ENCODE measurements at regions of chr17 and their contacts with region 1.

Region 1: DNA sequence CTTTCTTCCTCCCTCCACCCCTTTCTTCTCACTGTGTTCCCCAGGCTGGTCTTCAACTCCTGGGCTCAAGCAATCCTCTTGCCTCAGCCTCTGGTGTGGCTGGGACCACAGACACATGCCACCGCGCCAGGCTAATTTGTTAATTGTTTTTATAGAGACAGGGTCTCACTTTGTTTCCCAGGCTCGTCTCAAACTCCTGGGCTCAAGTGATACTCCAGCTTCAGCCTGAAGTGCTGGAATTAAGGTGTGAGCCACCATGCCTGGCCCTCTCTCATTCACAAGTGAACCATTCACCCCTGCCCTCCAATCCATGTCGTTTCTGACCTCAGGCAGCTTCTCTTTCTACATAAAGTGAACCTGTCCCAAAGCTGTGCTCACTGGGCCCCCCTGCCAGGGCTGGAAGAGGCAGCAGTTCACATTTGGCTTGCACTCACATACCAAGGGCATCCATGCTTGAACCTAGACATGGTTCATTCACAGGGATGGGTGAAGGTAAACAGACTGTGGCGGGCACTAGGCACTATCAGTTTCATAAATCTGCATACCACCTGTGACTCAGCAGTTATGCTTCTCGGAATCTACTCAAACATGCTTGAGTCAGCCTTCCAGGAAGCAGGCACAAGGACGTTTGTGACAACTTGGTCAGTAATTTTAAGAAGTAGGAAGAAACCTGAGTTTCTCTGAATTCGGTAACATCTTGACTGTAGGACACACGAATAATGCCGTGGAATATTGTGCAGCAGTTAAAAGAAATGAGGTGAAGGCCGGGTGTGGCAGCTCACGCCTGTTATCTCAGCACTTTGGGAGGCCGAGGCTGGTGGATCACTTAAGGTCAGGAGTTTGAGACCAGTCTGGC is 6.0 kb upstream of the RNF213 start:
- DNase-seq: peak; percentile 97 to 99
- ATAC-seq: peak; percentile 90
- H3K4me3 ChIP-seq: no peak overlapping the region
- H3K27ac ChIP-seq: peak overlapping the region; percentile 94 to 99
- H3K4me1 ChIP-seq: peaks cover 72% of the 10 kb centered on the region
- CTCF ChIP-seq: no peak
- EP300 ChIP-seq: peak; percentile 83 to 92; a peak in 4 of 5 replicates
- POLR2A ChIP-seq: no peak
- RAD21 ChIP-seq: peak in 1 of 2 experiments; percentile 29; a peak in 3 of 5 replicates

Region 2: DNA sequence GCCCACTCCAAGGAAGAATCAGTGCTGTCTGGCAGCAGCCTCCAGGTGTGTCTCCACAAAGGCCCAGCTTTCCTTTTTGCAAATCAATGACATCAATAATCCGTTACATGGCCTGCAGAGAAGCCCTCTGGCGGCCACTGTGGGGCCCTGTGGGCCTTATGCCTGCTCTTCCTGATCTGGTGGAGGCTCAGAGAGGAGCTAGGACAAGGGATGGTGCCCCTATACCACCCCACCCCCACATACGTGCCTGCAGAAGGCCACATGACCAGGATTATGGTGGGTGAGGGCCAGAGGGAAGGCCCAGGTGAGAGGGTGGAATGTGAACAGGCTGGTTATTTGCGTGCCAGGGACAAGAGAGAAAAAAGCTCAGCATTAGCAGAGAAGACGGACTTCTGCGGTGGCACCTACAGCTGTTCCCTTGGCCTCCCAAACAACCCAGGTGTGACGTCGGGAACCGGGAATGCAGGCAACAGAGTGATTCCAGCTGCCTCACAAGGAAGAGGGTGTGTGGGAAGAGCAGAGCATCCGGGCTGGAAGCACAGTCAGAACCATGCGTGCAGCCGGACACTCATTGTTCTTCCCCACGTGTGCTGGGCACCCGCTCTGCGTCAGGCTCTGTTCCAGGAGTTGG is 130.2 kb before region 1 on chr17:
- CTCF ChIA-PET with region 1: no interaction called
- POLR2A ChIA-PET with region 1: no interaction called
- DNase-seq: peak; percentile 45 to 53
- ATAC-seq: peak; percentile 71 to 87
- H3K4me3 ChIP-seq: no peak overlapping the region
- H3K27ac ChIP-seq: no peak overlapping the region
- H3K4me1 ChIP-seq: no peaks in the 10 kb centered on the region
- CTCF ChIP-seq: peak; percentile 36
- EP300 ChIP-seq: no peak
- POLR2A ChIP-seq: no peak; the same call in 1 of the 2 replicates
- RAD21 ChIP-seq: peak; percentile 19 to 32; a peak in 2 of 5 replicates

Region 3: GRCh38 chr17:80147035-80147836 is 107.4 kb before region 1 on chr17 and contains the start of gene EIF4A3:
- CTCF ChIA-PET with region 1: interaction called, 14 read pairs
- POLR2A ChIA-PET with region 1: interaction called, 3 read pairs
- DNase-seq: peak; percentile 100
- ATAC-seq: peak; percentile 92 to 93
- H3K4me3 ChIP-seq: peak within 1 kb of the TSS; percentile 65
- H3K27ac ChIP-seq: peak within 1 kb of the TSS; percentile 92 to 95
- H3K4me1 ChIP-seq: peaks cover 26% of the 10 kb centered on the region
- CTCF ChIP-seq: no peak
- EP300 ChIP-seq: no peak
- POLR2A ChIP-seq: peak; percentile 97
- RAD21 ChIP-seq: no peak
- polyA plus RNA-seq, gene EIF4A3: 181 and 201 TPM in 2 replicates

Region 4: DNA sequence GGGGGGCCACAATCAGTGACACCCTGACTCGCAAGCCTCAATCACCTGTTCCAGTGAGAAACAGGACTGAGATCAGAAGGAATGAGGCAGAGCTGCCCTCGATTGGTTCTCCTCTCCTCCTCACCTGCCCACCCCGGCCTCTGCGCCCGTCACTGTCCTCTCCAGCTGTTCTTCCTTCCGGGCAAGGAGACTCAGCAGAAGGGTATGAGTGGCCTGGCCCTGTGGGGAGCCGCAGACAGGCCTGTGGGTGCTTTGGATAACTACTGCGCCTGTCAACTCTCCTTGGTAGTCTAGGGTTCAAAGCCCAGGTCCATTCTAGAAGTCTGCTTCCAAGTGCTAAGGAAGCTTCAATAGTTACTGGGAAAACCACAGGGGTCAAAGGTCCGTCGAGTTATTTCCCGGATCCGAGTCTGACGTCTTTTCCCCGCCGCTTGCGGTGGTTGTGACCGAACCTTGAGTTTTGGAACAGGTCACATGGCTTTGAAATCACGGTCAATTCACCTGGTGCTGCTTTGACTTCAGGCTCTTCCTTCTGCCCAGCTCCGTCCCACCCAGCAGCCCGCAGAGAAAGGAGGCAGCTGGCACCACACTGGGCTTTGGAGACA is 76.5 kb before region 1 on chr17:
- CTCF ChIA-PET with region 1: interaction called, 18 read pairs
- POLR2A ChIA-PET with region 1: no interaction called
- DNase-seq: no peak
- ATAC-seq: no peak
- H3K4me3 ChIP-seq: no peak overlapping the region
- H3K27ac ChIP-seq: no peak overlapping the region
- H3K4me1 ChIP-seq: peaks cover 11% of the 10 kb centered on the region
- CTCF ChIP-seq: no peak
- EP300 ChIP-seq: no peak
- POLR2A ChIP-seq: no peak
- RAD21 ChIP-seq: no peak

Region 5: DNA sequence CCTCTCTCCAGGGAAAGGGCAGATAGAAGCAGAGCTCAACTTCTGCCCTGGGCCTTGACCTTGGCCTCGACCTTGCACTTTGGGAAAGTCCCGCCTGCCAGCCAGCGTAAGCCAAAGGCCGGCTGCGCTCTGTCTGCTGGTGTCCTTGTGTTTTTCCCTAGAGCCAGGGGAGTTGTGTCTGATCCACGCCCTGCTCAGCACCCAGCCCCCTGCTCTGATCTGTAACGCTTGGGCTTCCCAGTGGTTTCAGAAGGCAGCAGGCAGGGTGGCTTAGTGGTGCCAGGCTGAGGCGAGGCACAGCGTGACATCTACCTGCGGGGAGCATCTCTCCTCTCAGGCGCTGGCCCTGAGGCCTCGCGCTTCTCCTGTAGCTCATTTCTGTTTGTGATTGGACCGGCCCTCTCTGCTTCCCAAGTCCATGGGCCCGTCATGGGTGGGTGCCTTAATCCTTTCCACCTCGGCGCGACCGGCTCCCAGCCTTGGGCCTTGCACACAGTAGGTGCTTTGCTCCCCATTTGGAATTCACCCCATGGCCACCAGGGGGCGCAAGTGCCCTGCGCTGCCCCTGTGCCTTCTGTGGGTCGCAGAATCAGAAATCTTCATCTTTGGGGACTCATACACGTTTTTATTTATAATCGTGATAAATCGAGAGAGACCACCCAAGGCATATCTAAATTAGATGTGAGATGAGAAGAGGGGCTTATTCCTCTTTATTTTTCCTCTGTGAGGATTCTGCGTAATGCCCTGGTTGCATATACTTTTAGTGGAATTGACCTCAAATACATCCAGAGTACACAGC is 58.7 kb before region 1 on chr17:
- CTCF ChIA-PET with region 1: interaction called, 39 read pairs
- POLR2A ChIA-PET with region 1: no interaction called
- DNase-seq: no peak
- ATAC-seq: peak in 1 of 2 experiments; percentile 14; a peak in 1 of 6 replicates
- H3K4me3 ChIP-seq: no peak overlapping the region
- H3K27ac ChIP-seq: no peak overlapping the region
- H3K4me1 ChIP-seq: no peaks in the 10 kb centered on the region
- CTCF ChIP-seq: peak; percentile 83
- EP300 ChIP-seq: no peak
- POLR2A ChIP-seq: no peak
- RAD21 ChIP-seq: peak; percentile 81 to 88

Region 6: GRCh38 chr17:80203471-80203963 is 51.1 kb before region 1 on chr17:
- CTCF ChIA-PET with region 1: interaction called, 12 read pairs
- POLR2A ChIA-PET with region 1: no interaction called
- DNase-seq: no peak
- ATAC-seq: peak; percentile 16 to 18; a peak in 2 of 6 replicates
- H3K4me3 ChIP-seq: no peak overlapping the region
- H3K27ac ChIP-seq: peak overlapping the region in 1 of 2 experiments; percentile 62; a peak in 2 of 6 replicates
- H3K4me1 ChIP-seq: peaks cover 6% of the 10 kb centered on the region; the same call in 2 of the 3 replicates
- CTCF ChIP-seq: no peak
- EP300 ChIP-seq: no peak
- POLR2A ChIP-seq: no peak
- RAD21 ChIP-seq: no peak

Region 7: DNA sequence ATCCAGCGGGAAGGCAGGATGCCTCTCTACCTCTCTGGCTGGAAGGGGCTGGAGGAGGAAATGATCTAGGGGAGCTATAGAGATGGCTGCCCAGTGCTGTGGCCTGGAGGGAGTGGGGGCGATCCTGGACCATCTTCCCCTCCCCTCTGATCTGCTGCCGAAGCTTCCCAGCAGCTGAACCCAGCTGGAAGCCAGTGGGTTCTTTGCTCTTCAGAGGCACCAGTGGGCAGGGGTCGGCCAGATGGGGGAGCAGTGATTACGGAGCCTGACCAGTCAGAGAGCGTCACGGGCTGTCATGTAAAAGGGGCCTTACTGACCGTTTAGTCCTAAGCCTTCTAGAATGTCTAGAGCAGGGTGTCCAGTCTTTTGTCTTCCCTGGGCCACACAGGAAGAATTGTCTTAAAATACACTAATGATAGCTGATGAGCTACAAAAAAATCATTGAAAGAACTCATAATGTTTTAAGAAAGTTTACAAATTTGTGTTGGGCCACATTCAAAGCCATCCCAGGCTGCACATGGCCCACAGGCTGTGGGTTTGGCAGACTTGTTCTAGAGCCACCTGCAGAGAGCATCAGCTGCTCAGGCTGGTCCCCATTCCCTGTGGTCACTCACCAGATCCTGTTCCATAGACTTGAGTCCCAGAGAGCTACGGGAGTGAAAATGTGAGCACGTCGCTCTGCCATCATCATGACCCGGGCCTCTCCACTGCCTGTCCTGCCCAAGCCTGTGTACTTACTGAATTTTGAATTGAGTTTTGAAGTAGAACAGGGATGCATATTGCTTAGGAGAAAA is 27.7 kb before region 1 on chr17:
- CTCF ChIA-PET with region 1: interaction called, 22 read pairs
- POLR2A ChIA-PET with region 1: no interaction called
- DNase-seq: no peak
- ATAC-seq: no peak
- H3K4me3 ChIP-seq: no peak overlapping the region
- H3K27ac ChIP-seq: no peak overlapping the region
- H3K4me1 ChIP-seq: no peaks in the 10 kb centered on the region
- CTCF ChIP-seq: no peak
- EP300 ChIP-seq: no peak
- POLR2A ChIP-seq: no peak
- RAD21 ChIP-seq: no peak

Region 8: DNA sequence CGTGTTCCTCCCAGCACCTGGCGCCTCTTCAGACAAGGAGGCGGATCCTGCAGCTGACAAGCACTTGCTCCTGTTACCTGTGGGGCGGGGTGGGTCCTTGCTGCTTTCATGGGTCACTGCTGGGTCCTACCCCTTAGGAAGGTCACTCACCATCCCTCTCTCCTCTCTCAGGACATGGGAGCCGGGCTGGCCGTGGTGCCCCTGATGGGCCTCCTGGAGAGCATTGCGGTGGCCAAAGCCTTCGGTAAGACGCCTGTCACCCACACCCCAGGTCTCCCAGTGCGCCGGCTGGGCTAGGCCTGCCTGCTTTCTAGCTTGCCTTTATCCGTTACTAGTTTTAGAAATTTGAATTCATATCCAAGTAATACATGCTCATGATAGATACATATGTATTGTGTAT is 17.3 kb before region 1 on chr17:
- CTCF ChIA-PET with region 1: interaction called, 26 read pairs
- POLR2A ChIA-PET with region 1: no interaction called
- DNase-seq: no peak
- ATAC-seq: no peak
- H3K4me3 ChIP-seq: no peak overlapping the region
- H3K27ac ChIP-seq: no peak overlapping the region
- H3K4me1 ChIP-seq: no peaks in the 10 kb centered on the region
- CTCF ChIP-seq: no peak
- EP300 ChIP-seq: no peak
- POLR2A ChIP-seq: no peak
- RAD21 ChIP-seq: no peak

Region 9: DNA sequence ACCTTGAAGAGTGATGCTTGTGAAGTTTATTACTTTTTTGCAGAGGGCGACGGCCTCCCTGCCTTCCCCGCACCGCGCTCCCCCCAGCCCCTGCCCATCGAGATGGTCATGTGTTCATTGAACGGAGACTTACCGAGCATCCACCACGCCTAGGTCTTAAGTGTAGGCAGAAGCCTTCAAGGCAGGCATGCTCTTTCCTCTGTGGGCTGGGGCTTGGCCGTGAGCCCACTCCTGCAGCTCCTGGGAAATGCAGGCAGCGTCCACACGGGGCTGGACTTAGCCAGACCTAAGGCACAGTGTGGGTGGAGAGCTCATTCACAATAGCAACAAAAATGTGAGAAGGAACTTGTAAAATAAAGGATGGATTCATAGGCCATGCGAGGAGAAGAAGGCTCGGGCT is 25.3 kb after region 1 on chr17:
- CTCF ChIA-PET with region 1: no interaction called
- POLR2A ChIA-PET with region 1: no interaction called
- DNase-seq: no peak
- ATAC-seq: peak; percentile 20 to 46; a peak in 3 of 6 replicates
- H3K4me3 ChIP-seq: no peak overlapping the region
- H3K27ac ChIP-seq: no peak overlapping the region
- H3K4me1 ChIP-seq: peaks cover 3% of the 10 kb centered on the region; the same call in 1 of the 3 replicates
- CTCF ChIP-seq: no peak
- EP300 ChIP-seq: no peak
- POLR2A ChIP-seq: no peak
- RAD21 ChIP-seq: no peak

Measured in A549 (cell line).